ENCODE measurements at regions of chr1 and their contacts with region 1.

Region 1: DNA sequence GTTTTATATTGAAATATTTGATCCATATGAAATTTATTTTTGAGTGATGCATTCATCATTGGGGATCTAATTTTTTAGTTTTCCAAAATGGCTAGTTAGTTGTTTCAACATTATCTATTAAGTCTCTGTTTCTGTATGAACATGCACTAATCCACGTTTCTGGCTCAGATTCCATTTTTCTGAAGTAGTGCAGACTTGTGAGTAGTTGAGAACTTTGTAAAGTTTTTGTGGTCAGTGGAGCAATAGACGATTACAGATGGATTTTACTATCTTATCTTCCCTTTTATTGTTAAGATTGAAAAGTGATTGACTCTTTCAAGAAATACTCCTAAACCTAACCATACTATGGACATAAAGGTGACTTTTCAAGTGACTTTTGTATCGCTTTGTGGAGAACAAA is 16.7 kb downstream of the SOAT1 start:
- DNase-seq: no peak
- ATAC-seq: no peak
- H3K4me3 Mint-ChIP-seq: no peak overlapping the region
- H3K27ac Mint-ChIP-seq: peak overlapping the region; percentile 59
- H3K4me1 Mint-ChIP-seq: peaks cover 31% of the 10 kb centered on the region
- H3K27me3 Mint-ChIP-seq: no peaks in the 10 kb centered on the region

Region 2: GRCh38 chr1:179437171-179437570 is 126.9 kb after region 1 on chr1:
- CTCF ChIA-PET with region 1: no interaction called
- POLR2A ChIA-PET with region 1: interaction called, 10 read pairs
- intact Hi-C with region 1: no loop called
- DNase-seq: no peak
- ATAC-seq: no peak
- H3K4me3 Mint-ChIP-seq: no peak overlapping the region
- H3K27ac Mint-ChIP-seq: no peak overlapping the region
- H3K4me1 Mint-ChIP-seq: no peaks in the 10 kb centered on the region
- H3K27me3 Mint-ChIP-seq: peaks cover 14% of the 10 kb centered on the region

Measured in activated CD4-positive, alpha-beta T cell treated with anti-CD3 and anti-CD28 coated beads for 36 hours (primary cell).